ENCODE measurements at regions of chr5 and their contacts with region 1.

Region 1: GRCh38 chr5:154179846-154180710 is 10.5 kb upstream of the GALNT10 start:
- DNase-seq: peak in 15 of 35 experiments; percentile 5 to 68 (median 25)
- ATAC-seq: peak; percentile 80 to 92 (median 86)
- H3K4me3 ChIP-seq: no peak overlapping the region
- H3K4me3 Mint-ChIP-seq: no peak overlapping the region
- H3K27ac ChIP-seq: no peak overlapping the region
- H3K27ac Mint-ChIP-seq: no peak overlapping the region
- H3K4me1 ChIP-seq: no peaks in the 10 kb centered on the region
- H3K4me1 Mint-ChIP-seq: peaks cover 0 to 3% (median 0%) of the 10 kb centered on the region in 3 donors
- H3K27me3 ChIP-seq: peaks cover 0 to 5% of the 10 kb centered on the region in 2 experiments
- H3K27me3 Mint-ChIP-seq: peaks cover 3 to 4% of the 10 kb centered on the region in 2 donors

Region 2: GRCh38 chr5:154437281-154437965 is 257.3 kb after region 1 on chr5:
- CTCF ChIA-PET with region 1: no interaction called
- POLR2A ChIA-PET with region 1: interaction called in 1 of 2 experiments, 10 read pairs
- DNase-seq: no peak
- ATAC-seq: no peak
- H3K4me3 ChIP-seq: no peak overlapping the region
- H3K4me3 Mint-ChIP-seq: no peak overlapping the region
- H3K27ac ChIP-seq: no peak overlapping the region
- H3K27ac Mint-ChIP-seq: no peak overlapping the region
- H3K4me1 ChIP-seq: no peaks in the 10 kb centered on the region
- H3K4me1 Mint-ChIP-seq: peaks cover 9 to 13% (median 12%) of the 10 kb centered on the region in 3 donors
- H3K27me3 ChIP-seq: no peaks in the 10 kb centered on the region
- H3K27me3 Mint-ChIP-seq: no peaks in the 10 kb centered on the region

Measured in T-cell (primary cell).